Posterior vena cava (tissue), 2 donors: ENCODE measurements at regions of chr20 and their contacts with region 1.

Region 1: GRCh38 chr20:15339264-15339663 is 1001.9 kb upstream of the FLRT3 start:
- DNase-seq: no peak

Region 2: GRCh38 chr20:15415908-15416307 is 76.6 kb after region 1 on chr20:
- intact Hi-C with region 1: loop called in 1 of 2 experiments (anchors 2 kb)
- DNase-seq: no peak